Cardiac septum (tissue), 1 donor: ENCODE measurements at regions of chr15 and their contacts with region 1.

Region 1: DNA sequence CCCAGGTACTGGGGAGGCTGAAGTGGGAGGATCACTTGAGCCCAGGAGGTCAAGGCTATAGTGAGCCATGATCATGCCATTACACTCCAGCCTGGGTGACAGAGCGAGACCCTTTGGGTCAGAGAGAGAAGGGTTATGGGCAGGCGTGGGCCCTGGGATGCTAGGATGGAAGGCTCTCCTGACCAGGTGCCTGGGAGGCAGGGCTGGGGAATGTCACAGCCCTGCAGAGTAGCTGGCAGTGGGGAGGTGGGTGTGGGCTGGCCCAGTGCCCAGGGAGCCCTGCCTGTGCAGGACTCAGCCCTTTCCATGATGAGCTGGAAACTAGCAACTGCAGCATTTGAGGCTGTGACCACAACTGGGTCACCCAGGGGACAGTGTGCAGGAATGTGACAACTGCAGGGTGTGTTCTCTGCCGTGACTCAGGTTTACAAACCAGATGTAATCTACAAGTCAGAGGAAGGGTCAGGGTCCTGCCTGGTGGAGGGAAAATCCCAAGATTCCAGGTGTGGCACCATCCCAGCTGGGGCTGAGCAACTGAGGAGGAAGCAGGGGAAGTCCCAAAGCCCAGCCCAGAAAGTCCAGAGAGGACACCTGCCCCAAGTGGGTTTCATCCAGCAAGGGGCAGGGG is 45.4 kb downstream of the SLC28A1 start:
- DNase-seq: no peak

Region 2: DNA sequence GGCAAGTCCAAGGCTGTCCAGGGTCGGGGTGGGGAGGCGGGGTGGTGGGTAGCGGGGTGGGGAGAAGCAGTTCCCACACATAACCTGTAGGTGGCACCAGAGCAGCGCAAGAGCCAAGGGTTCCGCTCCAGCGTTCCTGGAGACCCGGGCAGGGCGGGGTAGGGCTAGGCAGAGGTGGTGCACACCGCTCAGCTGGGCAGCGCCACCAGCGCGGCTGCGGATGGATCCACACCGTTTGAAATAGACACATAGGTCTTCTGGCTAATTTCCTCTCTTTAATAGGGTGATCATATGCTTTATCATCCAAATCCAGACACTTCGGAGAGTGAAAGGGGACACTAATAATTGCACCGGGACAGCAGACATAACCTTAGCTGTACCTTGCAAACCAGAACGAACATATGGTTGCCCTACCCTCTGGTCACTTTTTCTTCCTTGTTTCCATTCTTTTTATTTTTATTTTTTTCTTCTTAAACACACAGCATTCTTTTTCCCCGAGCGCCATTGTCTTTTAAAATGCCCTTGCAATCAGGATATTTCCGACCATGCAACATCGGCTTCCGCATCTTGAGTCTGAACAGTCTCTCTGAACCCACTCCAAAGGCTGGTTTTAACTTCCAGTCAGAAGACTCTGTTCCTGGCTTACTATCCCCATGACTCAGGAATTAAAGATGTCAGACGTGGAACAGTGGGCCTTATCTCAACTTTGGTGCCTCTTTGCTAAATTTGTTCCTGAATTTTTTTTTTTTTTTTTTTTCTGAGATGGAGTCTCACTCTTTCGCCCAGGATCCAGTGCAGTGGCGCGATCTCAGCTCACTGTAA is 341.6 kb before region 1 on chr15:
- intact Hi-C with region 1: loop called (anchors 5 kb)
- DNase-seq: peak; percentile 94

Region 3: DNA sequence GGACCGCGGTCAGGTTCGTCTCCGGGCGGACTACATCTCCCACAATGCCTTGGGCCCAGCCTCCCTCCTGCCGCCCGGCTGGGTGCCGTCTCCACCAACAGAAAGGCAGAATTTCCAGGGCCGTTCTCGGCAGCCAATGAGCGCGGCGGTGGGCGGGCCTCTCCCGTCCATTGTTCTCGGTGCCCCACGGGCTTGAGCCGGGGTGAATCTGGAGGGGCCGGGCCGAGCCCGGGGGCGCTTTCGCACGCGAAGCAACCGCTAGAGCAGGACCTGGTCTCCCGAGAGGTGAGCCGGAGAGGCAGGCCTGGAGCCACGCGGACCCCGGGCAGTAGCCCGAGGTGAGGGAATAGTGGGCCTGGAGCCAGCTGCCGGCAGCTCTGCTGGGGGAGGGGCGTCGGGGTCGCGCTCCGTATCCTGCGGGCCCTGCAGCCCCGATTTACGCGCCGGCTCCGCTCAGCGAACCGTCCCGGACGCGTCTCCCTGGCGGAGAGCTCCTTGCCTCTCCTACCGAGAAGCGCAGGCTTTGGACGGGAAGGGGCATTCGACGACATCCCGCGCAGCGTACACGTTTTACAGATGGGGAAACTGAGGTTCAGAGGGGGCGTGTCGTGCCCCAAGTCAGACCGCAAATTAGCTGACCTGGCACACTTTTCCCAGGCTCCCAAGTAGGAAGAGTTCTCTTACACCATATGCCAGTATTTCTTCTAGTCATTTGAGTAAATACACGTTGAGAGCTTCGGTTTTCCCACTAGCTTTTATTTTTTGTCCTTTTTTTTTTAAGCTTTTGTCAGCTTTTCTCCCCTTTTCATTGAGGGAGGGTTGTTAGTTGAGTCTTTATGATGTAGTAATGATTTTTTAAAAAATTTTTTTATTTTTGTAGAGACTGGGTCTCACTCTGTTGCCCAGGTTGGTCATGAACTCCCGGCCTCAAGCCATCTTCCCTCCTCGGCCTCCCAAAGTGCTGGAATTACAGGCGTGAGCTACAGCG is 328.7 kb before region 1 on chr15 and contains the start of gene ZSCAN2:
- intact Hi-C with region 1: loop called (anchors 5 kb)
- DNase-seq: peak; percentile 98
- total RNA-seq, gene ZSCAN2: 4.6 TPM

Region 4: DNA sequence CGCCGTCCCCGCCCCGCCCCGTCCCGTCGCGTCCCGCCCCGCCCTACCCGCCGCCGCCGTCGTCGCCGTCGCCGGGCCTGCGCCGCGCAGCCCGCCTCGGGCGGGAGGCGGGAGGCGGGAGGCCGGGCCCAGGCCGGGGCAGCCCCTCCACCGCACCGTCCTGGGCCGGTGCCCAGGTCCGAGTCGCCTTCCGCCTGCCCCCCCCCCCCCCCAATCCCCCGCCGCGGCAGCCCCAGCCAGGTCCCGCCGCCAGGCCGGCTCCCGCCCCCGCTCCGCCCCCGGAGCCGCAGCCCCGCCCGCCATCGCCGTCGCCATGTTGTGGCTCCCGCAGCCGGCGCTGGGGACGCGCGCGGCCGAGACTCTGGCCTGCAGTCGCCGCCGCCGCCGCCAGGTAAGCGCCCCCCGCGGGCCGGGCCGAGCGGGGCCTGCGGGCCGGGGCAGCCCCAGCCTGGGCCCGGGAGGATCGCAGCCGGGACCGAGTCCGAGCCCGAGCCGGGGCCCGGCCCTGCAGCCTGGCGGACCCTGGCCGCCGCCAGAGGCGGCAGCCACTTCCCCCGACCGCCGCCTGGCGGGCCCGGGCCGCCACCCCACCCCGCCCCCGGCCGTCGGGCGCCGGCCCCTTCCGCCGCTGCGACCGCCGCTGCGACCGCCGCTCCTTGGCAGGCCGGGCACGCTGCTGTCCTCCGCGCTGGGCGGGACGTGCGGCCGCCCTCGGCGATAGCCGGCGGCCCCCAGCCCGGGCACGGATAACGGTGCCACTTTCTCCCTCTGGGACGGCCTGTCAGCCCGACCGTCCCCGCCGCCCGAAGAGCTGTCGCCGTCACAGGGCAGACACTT is 181.4 kb before region 1 on chr15 and contains the start of gene ZNF592:
- intact Hi-C with region 1: loop called (anchors 5 kb)
- DNase-seq: peak; percentile 94
- total RNA-seq, gene ZNF592: 25.7 TPM

Region 5: DNA sequence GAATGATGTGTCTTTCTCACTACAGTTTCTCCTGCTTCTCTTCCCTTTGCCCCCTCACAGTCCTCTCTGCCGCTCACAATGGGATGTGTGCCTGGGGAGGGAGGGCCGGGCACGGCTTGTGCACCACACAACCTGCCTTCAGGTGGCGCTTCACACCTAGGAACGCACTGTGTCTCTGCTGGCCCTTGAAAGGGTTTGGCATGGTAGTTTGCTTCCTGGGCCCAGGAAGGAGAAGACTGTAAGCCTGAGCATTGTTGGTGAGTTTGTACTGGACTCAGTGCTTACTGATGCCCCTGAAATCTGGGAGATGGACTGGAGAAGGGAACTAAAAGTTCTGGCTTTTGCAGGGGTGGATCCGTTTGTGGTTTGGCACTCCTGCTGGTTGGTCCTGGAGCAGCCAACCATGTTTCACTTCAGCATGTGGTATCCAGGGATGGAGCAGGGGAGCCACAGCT is 103.5 kb before region 1 on chr15:
- intact Hi-C with region 1: no loop called
- DNase-seq: no peak

Region 6: DNA sequence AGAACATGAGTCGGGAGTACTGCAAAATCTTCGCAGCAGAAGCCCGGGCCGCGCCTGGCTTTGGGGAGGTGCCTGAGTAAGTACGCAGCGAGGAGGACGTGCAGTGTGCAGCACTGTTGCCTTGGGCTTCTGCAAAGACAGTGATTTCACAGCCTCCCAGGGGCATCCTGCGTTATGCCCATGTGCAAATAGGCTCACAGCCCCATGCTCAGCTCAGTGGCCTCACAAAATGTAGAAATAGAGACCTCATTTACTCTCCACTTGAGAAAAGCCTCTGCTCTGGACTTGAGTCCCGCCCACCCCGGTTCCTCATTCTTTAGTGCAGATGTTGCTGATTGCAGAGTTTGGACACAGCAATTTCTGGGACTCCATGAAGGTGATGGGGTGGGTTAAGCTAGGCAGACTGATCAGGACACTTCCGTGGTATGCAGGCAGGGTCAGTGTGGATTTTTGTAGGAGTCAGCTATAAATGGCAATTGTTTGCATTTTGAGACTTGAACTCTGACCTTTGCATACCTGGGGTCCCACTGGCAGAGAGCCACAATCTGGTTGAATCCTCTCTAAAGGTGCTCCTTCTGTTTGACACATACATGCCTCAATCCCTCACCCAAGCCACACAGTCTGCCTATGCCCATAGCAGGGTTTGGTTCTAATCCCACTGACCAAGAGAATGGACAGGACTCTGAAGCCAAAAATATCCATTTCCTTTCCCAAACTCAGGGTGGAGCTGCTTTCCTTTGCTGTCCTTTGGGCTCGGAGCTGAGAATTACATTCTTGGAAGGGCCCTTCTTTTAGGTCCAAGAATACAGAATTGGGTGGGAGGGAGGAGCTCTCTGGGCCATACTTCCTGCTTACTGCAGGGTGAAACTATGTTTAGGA is 66.1 kb before region 1 on chr15:
- intact Hi-C with region 1: loop called (anchors 5 kb)
- DNase-seq: no peak

Region 7: DNA sequence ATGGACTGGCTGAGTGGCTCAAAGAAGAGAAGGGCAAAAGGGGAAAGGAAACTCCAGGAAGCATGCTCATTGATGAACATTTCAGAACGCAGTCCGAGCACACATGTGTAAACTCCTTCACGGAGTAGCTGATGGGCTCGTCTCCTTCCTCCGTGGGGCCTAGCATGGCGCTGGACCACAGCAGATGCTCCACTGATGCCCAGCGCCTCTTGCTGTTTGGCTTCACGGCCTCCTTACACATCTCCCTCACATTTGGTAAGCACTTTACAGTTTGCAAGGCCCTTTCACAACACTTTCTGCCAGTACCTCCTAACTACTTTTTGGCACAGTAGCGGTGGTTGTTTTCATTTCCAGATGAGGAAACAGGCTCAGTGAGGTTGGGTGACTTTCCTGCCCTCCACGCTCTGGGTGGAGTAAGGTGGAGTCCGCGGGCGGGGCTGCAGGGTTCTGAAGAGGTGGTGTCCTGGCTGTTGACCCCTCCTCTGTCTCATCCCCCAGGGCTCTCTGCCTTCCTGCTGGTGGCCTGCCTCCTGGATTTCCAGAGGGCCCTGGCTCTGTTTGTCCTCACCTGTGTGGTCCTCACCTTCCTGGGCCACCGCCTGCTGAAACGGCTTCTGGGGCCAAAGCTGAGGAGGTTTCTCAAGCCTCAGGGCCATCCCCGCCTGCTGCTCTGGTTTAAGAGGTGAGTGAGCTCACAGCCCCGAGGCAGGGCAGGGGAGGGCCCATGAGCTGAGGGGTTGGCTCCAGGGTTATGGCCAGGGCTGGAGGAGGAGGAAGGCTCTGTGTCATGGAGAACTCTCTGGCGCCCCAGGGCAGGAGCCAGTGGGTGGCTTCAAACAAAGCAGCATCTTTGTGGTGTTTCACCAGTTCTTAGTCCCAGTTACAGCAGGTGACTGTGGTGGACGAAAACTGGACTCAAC is 35.2 kb before region 1 on chr15:
- intact Hi-C with region 1: no loop called
- DNase-seq: no peak